GM12878 (cell line): ENCODE measurements at regions of chr2 and their contacts with region 1.

Region 1: GRCh38 chr2:180125245-180125962 is 118.3 kb upstream of the CWC22 start:
- DNase-seq: peak; percentile 12
- ATAC-seq: peak; percentile 90
- H3K4me3 ChIP-seq: no peak overlapping the region
- H3K27ac ChIP-seq: no peak overlapping the region
- H3K4me1 ChIP-seq: no peaks in the 10 kb centered on the region
- H3K27me3 ChIP-seq: no peaks in the 10 kb centered on the region; a peak in 1 of 4 replicates
- CTCF ChIP-seq: peak; percentile 45 to 59 (median 50); a peak in 5 of 6 replicates
- EP300 ChIP-seq: no peak
- POLR2A ChIP-seq: no peak
- RAD21 ChIP-seq: peak; percentile 58

Region 2: GRCh38 chr2:180101846-180102245 is 23.6 kb before region 1 on chr2:
- CTCF ChIA-PET with region 1: no interaction called
- POLR2A ChIA-PET with region 1: no interaction called
- RAD21 ChIA-PET with region 1: no interaction called
- SMC1A ChIA-PET with region 1: no interaction called
- in situ Hi-C with region 1: no loop called
- intact Hi-C with region 1: no loop called
- DNase-seq: no peak
- ATAC-seq: no peak
- H3K4me3 ChIP-seq: no peak overlapping the region
- H3K27ac ChIP-seq: no peak overlapping the region
- H3K4me1 ChIP-seq: no peaks in the 10 kb centered on the region
- H3K27me3 ChIP-seq: no peaks in the 10 kb centered on the region
- CTCF ChIP-seq: no peak
- EP300 ChIP-seq: no peak
- POLR2A ChIP-seq: no peak
- RAD21 ChIP-seq: no peak

Region 3: GRCh38 chr2:180289627-180290026 is 164.2 kb after region 1 on chr2:
- CTCF ChIA-PET with region 1: no interaction called
- POLR2A ChIA-PET with region 1: no interaction called
- RAD21 ChIA-PET with region 1: no interaction called
- SMC1A ChIA-PET with region 1: no interaction called
- in situ Hi-C with region 1: no loop called
- intact Hi-C with region 1: no loop called
- DNase-seq: no peak
- ATAC-seq: no peak
- H3K4me3 ChIP-seq: no peak overlapping the region
- H3K27ac ChIP-seq: no peak overlapping the region
- H3K4me1 ChIP-seq: no peaks in the 10 kb centered on the region
- H3K27me3 ChIP-seq: no peaks in the 10 kb centered on the region
- CTCF ChIP-seq: no peak
- EP300 ChIP-seq: no peak
- POLR2A ChIP-seq: no peak
- RAD21 ChIP-seq: no peak

Region 4: DNA sequence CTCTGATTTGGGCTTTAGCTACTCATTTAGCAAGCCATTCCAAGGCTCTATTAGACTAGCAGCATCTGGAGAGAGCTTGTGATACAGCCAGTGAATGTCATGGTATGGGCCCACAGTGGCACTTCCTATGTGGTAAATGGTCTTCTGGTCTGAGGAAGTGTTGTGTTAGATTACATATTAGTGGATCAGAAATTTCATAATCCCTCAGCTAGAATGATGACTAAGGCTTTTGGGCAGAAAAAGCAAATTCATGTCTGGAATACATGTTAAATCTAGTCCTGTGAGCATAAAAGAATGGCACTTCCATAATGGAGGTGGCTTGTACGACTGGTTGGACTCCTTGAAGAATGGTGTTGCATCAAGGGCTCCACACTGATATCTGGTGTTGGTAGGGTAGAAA is 318.5 kb after region 1 on chr2:
- CTCF ChIA-PET with region 1: no interaction called
- POLR2A ChIA-PET with region 1: no interaction called
- RAD21 ChIA-PET with region 1: no interaction called
- SMC1A ChIA-PET with region 1: no interaction called
- in situ Hi-C with region 1: no loop called
- intact Hi-C with region 1: no loop called
- DNase-seq: no peak
- ATAC-seq: no peak
- H3K4me3 ChIP-seq: no peak overlapping the region
- H3K27ac ChIP-seq: no peak overlapping the region
- H3K4me1 ChIP-seq: no peaks in the 10 kb centered on the region
- H3K27me3 ChIP-seq: no peaks in the 10 kb centered on the region
- CTCF ChIP-seq: no peak
- EP300 ChIP-seq: no peak
- POLR2A ChIP-seq: no peak
- RAD21 ChIP-seq: no peak

Region 5: DNA sequence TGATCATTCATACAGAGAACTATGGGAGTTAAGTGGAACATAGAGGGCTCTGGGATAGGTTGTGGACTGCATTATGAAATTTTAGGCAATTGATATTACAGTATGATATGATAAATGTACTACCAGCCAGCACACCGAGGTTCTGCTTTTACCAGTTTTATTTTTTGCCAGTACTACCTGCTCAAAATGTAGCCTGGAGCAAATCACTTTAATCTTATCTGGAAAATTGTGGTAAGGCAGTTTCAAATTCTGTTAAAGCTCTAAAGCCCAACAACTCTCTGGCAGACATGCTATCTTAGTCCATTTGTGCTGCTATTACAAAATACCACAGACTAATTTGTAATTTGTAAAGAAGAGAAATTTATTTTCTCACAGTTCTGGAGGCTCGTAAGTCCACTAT is 356.6 kb after region 1 on chr2:
- CTCF ChIA-PET with region 1: interaction called, 7 read pairs
- POLR2A ChIA-PET with region 1: no interaction called
- RAD21 ChIA-PET with region 1: interaction called, 6 read pairs
- SMC1A ChIA-PET with region 1: interaction called, 7 read pairs
- in situ Hi-C with region 1: no loop called
- intact Hi-C with region 1: loop called (anchors 5 kb)
- DNase-seq: no peak
- ATAC-seq: no peak
- H3K4me3 ChIP-seq: no peak overlapping the region
- H3K27ac ChIP-seq: no peak overlapping the region
- H3K4me1 ChIP-seq: no peaks in the 10 kb centered on the region
- H3K27me3 ChIP-seq: no peaks in the 10 kb centered on the region
- CTCF ChIP-seq: no peak
- EP300 ChIP-seq: no peak
- POLR2A ChIP-seq: no peak
- RAD21 ChIP-seq: no peak

Region 6: DNA sequence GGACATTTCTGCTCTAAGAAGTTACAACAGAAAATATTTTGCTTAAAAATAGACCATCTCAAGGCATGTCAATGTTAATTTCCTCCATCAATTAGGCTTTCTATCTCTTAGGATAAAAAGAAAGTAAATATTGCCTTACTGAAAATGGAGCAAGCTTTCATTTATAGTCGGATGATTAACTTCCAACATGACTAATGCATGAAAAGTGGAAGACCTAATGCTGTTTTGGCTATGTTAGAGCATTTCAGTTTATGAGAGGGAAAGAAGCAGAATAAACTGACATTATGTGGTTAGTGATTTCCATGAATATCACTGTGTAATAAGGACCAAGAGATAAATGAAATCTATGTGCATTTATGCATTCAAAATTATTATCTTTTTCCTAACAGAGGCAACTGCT is 379.8 kb after region 1 on chr2:
- CTCF ChIA-PET with region 1: no interaction called
- POLR2A ChIA-PET with region 1: no interaction called
- RAD21 ChIA-PET with region 1: no interaction called
- SMC1A ChIA-PET with region 1: no interaction called
- in situ Hi-C with region 1: no loop called
- intact Hi-C with region 1: no loop called
- DNase-seq: no peak
- ATAC-seq: no peak
- H3K4me3 ChIP-seq: no peak overlapping the region
- H3K27ac ChIP-seq: no peak overlapping the region
- H3K4me1 ChIP-seq: no peaks in the 10 kb centered on the region
- H3K27me3 ChIP-seq: no peaks in the 10 kb centered on the region
- CTCF ChIP-seq: no peak
- EP300 ChIP-seq: no peak
- POLR2A ChIP-seq: no peak
- RAD21 ChIP-seq: no peak

Region 7: DNA sequence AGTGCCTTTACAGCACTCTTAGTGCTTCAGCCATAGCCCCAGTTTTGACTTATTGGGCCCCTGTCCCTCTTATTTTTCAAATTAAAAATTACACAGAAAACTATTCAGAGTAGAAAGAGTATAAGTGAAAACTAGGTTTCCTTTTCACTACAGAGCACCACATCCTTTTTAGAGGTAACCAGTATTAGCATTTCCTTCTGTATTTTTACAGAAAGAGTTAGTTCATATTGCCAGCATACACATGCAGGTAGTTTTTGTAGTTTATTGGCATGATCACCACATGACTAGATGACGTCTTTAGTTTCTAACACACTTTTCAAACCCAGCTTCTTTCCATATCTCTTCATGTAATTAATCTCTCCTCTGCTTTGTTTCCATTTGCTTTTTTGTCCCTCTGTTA is 921.4 kb after region 1 on chr2:
- CTCF ChIA-PET with region 1: interaction called, 11 read pairs
- POLR2A ChIA-PET with region 1: no interaction called
- RAD21 ChIA-PET with region 1: interaction called, 5 read pairs
- SMC1A ChIA-PET with region 1: interaction called, 3 read pairs
- in situ Hi-C with region 1: no loop called
- intact Hi-C with region 1: no loop called
- DNase-seq: no peak
- ATAC-seq: peak; percentile 41
- H3K4me3 ChIP-seq: no peak overlapping the region
- H3K27ac ChIP-seq: no peak overlapping the region
- H3K4me1 ChIP-seq: no peaks in the 10 kb centered on the region; the same call in 1 of the 2 replicates
- H3K27me3 ChIP-seq: no peaks in the 10 kb centered on the region
- CTCF ChIP-seq: no peak
- EP300 ChIP-seq: no peak
- POLR2A ChIP-seq: no peak
- RAD21 ChIP-seq: no peak

Region 8: GRCh38 chr2:181466661-181467576 is 1341.5 kb after region 1 on chr2:
- CTCF ChIA-PET with region 1: interaction called, 3 read pairs
- POLR2A ChIA-PET with region 1: no interaction called
- RAD21 ChIA-PET with region 1: no interaction called
- SMC1A ChIA-PET with region 1: no interaction called
- in situ Hi-C with region 1: no loop called
- intact Hi-C with region 1: loop called (anchors 10 kb)
- DNase-seq: no peak
- ATAC-seq: peak; percentile 66
- H3K4me3 ChIP-seq: no peak overlapping the region
- H3K27ac ChIP-seq: no peak overlapping the region
- H3K4me1 ChIP-seq: peaks cover 31% of the 10 kb centered on the region
- H3K27me3 ChIP-seq: no peaks in the 10 kb centered on the region
- CTCF ChIP-seq: peak; percentile 74 to 81 (median 79)
- EP300 ChIP-seq: no peak
- POLR2A ChIP-seq: no peak
- RAD21 ChIP-seq: peak; percentile 70